Activated CD4-positive, alpha-beta memory T cell treated with anti-CD3 and anti-CD28 coated beads, Interleukin-2, amount 10 ng/mL, durations not matched to agents 7 days and 5 days (primary cell): ENCODE measurements at regions of chr12 and their contacts with region 1.

Region 1: DNA sequence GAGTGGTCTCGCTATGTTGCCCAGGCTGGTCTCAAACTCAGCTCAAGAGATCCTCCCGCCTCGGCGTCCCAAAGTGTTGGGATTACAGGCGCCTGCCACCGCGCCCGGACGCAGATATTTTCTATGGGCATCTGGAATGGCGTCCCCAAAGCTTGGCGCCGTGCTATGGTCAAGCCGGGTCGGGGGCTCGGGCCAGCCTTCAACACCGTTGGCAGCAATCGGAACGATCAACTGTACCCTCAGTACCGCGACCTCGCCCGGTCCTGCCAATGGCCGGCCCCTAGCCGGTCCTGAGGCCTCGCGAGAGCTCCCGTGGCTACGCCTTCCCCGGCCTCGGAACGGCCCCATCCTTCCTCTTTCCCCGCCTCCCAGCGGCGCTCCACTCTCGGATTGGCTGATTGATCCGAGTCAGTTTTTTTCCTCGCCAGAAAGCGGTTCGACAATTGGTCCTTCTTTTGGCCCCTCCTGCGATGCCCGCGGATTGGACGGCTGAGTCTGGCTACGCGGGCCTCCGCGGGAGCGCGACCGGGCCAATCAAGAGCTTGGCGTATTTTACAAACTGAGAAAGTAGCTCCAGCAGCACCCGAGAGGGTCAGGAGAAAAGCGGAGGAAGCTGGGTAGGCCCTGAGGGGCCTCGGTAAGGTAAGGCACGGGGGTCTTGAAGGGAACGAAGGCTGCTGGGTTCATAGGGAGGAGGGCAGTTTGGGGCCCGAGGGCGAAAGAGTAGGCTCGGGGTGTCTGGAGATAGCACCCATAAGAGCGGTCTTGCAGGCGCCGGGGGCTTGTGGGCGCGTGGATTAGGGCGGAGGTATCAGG is at the start of gene TROAP:
- DNase-seq: peak; percentile 99
- H3K4me3 Mint-ChIP-seq: peak within 1 kb of the TSS; percentile 94
- H3K27ac Mint-ChIP-seq: peak within 1 kb of the TSS; percentile 86
- H3K4me1 Mint-ChIP-seq: peaks cover 33% of the 10 kb centered on the region
- H3K27me3 Mint-ChIP-seq: no peaks in the 10 kb centered on the region
- total RNA-seq, gene TROAP: 75.1 to 79.5 TPM

Region 2: GRCh38 chr12:49244176-49244575 is 78.7 kb before region 1 on chr12:
- CTCF ChIA-PET with region 1: no interaction called
- POLR2A ChIA-PET with region 1: no interaction called
- DNase-seq: no peak
- H3K4me3 Mint-ChIP-seq: no peak overlapping the region
- H3K27ac Mint-ChIP-seq: no peak overlapping the region
- H3K4me1 Mint-ChIP-seq: no peaks in the 10 kb centered on the region
- H3K27me3 Mint-ChIP-seq: no peaks in the 10 kb centered on the region

Region 3: GRCh38 chr12:49264738-49265515 is 58.0 kb before region 1 on chr12 and contains the start of gene TUBA1C:
- CTCF ChIA-PET with region 1: interaction called, 3 read pairs
- POLR2A ChIA-PET with region 1: interaction called, 40 read pairs
- DNase-seq: peak; percentile 93
- H3K4me3 Mint-ChIP-seq: peak within 1 kb of the TSS; percentile 95
- H3K27ac Mint-ChIP-seq: peak within 1 kb of the TSS; percentile 95
- H3K4me1 Mint-ChIP-seq: peaks cover 56% of the 10 kb centered on the region
- H3K27me3 Mint-ChIP-seq: no peaks in the 10 kb centered on the region
- total RNA-seq, gene TUBA1C: 250 to 262 TPM

Region 4: DNA sequence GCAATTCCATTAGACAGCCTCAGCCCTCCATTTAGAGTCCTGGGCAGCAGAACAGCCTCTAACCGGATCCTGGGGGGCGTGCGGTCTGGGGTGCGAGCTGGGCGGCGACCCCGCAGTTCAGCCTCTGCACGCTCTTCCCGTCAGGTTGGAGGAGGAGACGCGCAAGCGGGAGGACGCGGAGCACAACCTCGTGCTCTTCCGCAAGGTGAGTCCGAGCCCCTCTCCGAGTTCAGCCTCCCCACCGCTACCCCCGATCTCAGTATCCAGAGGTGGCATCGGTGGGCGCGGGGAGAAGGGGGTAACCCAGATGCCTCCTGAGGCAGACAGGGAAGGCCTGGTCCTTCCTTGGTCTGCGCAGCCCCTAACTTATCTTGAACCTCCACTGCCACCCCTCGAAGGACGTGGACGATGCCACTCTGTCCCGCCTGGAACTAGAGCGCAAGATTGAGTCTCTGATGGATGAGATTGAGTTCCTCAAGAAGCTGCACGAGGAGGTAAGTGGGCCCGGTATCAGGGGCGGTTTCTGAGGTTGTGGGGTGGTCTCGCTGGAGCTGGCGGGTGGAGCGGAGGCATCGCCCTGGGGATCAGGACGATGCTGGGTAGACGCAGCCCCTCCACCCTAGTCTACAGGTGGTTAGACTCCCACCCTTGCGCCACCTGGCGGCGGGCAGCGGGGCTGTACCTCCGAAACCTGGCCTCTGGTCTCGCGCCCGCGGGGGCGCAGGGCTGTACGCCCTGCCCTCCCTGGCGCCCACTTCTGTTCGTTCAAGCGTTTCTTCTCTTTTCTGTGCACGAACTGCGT is 26.7 kb before region 1 on chr12:
- CTCF ChIA-PET with region 1: interaction called, 36 read pairs
- POLR2A ChIA-PET with region 1: interaction called, 21 read pairs
- DNase-seq: peak; percentile 68
- H3K4me3 Mint-ChIP-seq: peak overlapping the region; percentile 62
- H3K27ac Mint-ChIP-seq: no peak overlapping the region
- H3K4me1 Mint-ChIP-seq: peaks cover 34% of the 10 kb centered on the region
- H3K27me3 Mint-ChIP-seq: peaks cover 53% of the 10 kb centered on the region

Region 5: DNA sequence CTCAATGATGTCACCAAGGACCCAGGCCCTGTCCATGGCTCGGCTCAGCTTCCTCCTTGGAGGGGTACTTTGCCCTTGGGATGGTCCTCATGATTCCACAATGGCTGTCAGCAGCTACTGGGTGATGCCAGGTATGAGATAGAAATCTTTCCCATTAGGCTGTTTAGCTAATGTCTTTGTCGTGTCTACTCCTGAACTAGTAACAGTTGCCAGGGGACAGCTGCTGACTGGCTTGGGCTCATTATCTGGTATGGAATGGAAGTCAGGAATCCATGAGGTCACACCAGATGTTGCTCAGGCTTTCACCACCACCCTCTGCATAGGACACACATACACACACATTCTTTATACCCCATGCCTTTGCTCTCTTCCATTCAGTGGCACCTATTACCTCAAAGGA is 18.8 kb before region 1 on chr12:
- CTCF ChIA-PET with region 1: no interaction called
- POLR2A ChIA-PET with region 1: interaction called, 10 read pairs
- DNase-seq: no peak
- H3K4me3 Mint-ChIP-seq: no peak overlapping the region
- H3K27ac Mint-ChIP-seq: no peak overlapping the region
- H3K4me1 Mint-ChIP-seq: peaks cover 9% of the 10 kb centered on the region
- H3K27me3 Mint-ChIP-seq: peaks cover 25% of the 10 kb centered on the region

Region 6: GRCh38 chr12:49336645-49337584 is 14.0 kb after region 1 on chr12 and contains the start of gene C1QL4:
- CTCF ChIA-PET with region 1: interaction called, 51 read pairs
- POLR2A ChIA-PET with region 1: interaction called, 46 read pairs
- DNase-seq: peak; percentile 87
- H3K4me3 Mint-ChIP-seq: peak within 1 kb of the TSS; percentile 59
- H3K27ac Mint-ChIP-seq: no peak within 1 kb of the TSS
- H3K4me1 Mint-ChIP-seq: peaks cover 19% of the 10 kb centered on the region
- H3K27me3 Mint-ChIP-seq: peaks cover 86% of the 10 kb centered on the region
- total RNA-seq, gene C1QL4: not detected

Region 7: GRCh38 chr12:49342066-49342913 is 19.4 kb after region 1 on chr12:
- CTCF ChIA-PET with region 1: interaction called, 51 read pairs
- POLR2A ChIA-PET with region 1: interaction called, 17 read pairs
- DNase-seq: peak; percentile 80
- H3K4me3 Mint-ChIP-seq: peak overlapping the region; percentile 35
- H3K27ac Mint-ChIP-seq: no peak overlapping the region
- H3K4me1 Mint-ChIP-seq: peaks cover 40% of the 10 kb centered on the region
- H3K27me3 Mint-ChIP-seq: peaks cover 90% of the 10 kb centered on the region

Region 8: GRCh38 chr12:49347384-49348237 is 24.7 kb after region 1 on chr12:
- CTCF ChIA-PET with region 1: interaction called, 20 read pairs
- POLR2A ChIA-PET with region 1: interaction called, 17 read pairs
- DNase-seq: peak; percentile 80
- H3K4me3 Mint-ChIP-seq: peak overlapping the region; percentile 57
- H3K27ac Mint-ChIP-seq: no peak overlapping the region
- H3K4me1 Mint-ChIP-seq: peaks cover 34% of the 10 kb centered on the region
- H3K27me3 Mint-ChIP-seq: peaks cover 71% of the 10 kb centered on the region